ENCODE measurements at regions of chr19 and their contacts with region 1.

Region 1: DNA sequence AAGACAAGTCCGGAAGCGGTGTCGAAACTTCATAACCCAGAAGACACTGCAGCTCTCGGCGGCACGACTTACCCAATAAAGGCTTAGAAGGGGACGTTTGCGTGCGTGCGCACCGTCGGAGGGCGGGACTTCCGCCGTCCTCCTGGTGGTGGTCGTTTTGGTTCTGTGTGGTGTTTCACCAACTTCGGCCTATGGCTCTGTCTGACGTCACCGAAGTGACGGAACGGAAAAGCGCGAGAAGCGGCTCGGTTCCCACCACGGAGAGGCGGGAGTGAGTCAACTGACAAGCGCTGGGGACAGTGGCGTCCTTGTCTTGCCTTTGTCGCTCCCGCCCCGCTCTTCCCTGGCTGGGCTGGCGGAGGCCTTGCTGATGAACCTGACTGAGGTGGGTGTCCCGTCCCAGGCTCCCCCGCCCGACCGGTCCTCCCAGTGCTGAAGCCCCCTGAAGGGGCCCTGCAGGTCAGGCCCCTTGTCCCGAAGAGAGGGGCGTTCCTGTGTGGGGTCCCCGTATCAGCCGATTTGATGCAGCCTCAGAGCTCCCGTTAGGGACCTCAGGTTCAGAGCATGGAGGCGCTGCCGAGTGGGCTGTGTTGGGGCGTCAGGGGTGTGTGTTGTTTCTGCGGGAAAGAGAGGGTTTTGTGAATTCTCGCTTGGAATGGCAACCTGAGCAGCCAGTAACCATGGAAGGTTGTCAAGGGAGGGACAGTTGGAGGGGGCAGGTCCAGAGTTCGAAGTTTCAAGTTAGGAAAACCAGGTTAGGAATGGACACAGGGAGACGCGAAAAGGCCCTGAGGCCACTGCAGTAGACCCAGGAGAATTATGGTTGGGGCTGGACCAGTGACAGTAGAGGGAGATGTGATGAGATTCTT is at the start of gene ZNF548:
- DNase-seq: peak; percentile 96
- H3K4me3 Mint-ChIP-seq: peak within 1 kb of the TSS; percentile 75
- H3K27ac Mint-ChIP-seq: peak within 1 kb of the TSS; percentile 90
- H3K4me1 Mint-ChIP-seq: peaks cover 10% of the 10 kb centered on the region
- H3K27me3 Mint-ChIP-seq: no peaks in the 10 kb centered on the region
- CTCF ChIP-seq: no peak
- total RNA-seq, gene ZNF548: 20.3 and 23.0 TPM in 2 replicates

Region 2: GRCh38 chr19:57191141-57192076 is 198.6 kb before region 1 on chr19 and contains the start of gene ZNF264:
- CTCF ChIA-PET with region 1: no interaction called
- intact Hi-C with region 1: loop called (anchors 10 kb)
- DNase-seq: peak; percentile 93
- H3K4me3 Mint-ChIP-seq: peak within 1 kb of the TSS; percentile 85
- H3K27ac Mint-ChIP-seq: peak within 1 kb of the TSS; percentile 91
- H3K4me1 Mint-ChIP-seq: peaks cover 11% of the 10 kb centered on the region
- H3K27me3 Mint-ChIP-seq: no peaks in the 10 kb centered on the region
- CTCF ChIP-seq: no peak
- total RNA-seq, gene ZNF264: 28.7 and 29.0 TPM in 2 replicates

Region 3: DNA sequence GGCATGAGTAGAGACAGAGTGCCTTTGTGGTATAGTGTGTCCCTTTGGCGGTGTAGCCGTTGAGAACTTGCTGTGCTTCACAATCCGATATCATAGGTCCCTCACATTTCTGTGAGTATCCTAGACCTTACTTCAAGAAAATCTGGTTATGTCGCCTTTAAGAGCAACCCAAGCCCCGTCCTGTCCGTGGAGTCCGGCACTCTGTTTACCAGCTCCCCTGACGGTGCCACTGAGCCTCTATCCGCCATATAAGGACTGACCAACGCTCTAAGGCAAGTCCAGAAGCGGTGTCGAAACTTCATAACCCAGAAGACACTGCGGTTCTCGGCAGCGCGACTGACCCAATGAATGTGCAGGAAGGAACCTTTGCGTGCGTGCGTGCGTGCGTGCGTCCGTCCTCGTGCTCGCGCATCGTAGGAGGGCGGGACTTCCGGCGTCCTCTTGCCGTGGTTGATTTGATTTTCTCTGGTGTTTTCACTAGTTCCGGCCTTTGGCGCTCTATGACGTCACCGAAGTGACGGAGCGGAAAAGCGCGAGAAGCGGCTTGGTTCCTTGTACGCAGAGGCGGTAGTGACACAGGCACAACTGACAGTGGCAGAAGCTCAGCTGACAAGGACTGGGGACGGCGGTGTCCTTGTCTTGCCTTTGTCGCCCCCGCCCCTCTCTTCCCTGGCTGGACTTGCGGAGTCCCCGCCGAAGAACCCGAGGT is 26.8 kb before region 1 on chr19 and contains the starts of genes TRAPPC2B and ZNF547:
- CTCF ChIA-PET with region 1: interaction called, 5 read pairs
- intact Hi-C with region 1: loop called (anchors 1 kb)
- DNase-seq: peak; percentile 99
- H3K4me3 Mint-ChIP-seq: peak within 1 kb of the TSS; percentile 91
- H3K27ac Mint-ChIP-seq: peak within 1 kb of the TSS; percentile 99
- H3K4me1 Mint-ChIP-seq: peaks cover 21% of the 10 kb centered on the region
- H3K27me3 Mint-ChIP-seq: no peaks in the 10 kb centered on the region
- CTCF ChIP-seq: no peak
- total RNA-seq, gene TRAPPC2B: 11.7 and 16.3 TPM in 2 replicates
- total RNA-seq, gene ZNF547: 7.2 and 7.7 TPM in 2 replicates

Region 4: GRCh38 chr19:57410877-57411671 is 21.1 kb after region 1 on chr19 and contains the start of gene ZNF17:
- CTCF ChIA-PET with region 1: no interaction called
- intact Hi-C with region 1: loop called (anchors 1 kb)
- DNase-seq: peak; percentile 94
- H3K4me3 Mint-ChIP-seq: peak within 1 kb of the TSS; percentile 99
- H3K27ac Mint-ChIP-seq: peak within 1 kb of the TSS; percentile 65
- H3K4me1 Mint-ChIP-seq: peaks cover 10% of the 10 kb centered on the region
- H3K27me3 Mint-ChIP-seq: no peaks in the 10 kb centered on the region
- CTCF ChIP-seq: no peak
- total RNA-seq, gene ZNF17: 14.7 and 15.8 TPM in 2 replicates

Region 5: DNA sequence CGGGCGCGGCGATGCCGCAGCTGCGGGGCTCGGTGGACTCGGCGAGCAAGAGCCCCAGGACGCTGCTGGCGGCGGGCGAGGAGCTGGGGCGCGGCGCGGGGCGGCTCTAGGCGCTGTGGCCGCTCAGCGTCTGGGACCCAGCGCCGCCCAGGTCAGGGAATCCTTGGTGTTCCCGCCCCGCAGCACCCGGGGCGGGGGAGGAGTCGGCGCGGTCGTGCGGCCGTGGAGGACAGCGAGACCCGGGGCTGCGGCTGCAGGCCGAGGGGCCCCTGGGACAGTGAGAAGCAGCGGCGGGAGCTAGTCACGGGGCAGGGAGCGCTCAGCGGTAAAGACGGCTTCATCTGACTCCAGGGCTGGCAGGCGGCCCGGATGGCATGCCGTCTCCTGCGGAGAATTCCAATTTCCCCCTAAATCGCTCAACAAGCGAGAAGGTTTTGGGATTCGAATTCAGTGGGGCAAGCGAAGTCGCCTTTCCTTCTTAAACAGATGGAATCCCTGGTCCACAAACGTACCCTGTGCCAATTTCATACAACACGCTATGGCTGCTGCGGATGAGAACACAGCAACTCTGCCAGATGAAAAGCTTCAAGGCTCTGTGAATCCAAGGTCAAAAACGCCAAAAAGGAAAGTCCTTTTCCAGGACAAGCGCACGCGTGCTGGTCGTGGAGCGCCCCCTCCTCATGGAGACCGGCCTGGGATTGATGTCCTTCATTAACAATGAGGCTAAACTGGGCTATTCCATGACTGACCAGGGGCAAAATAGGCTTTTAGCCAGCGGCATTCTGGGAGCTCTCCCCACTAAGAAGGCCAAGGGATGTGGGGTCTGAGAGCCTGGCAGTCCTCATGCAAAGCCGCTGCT is 274.5 kb after region 1 on chr19:
- CTCF ChIA-PET with region 1: no interaction called
- intact Hi-C with region 1: no loop called
- DNase-seq: peak; percentile 49
- H3K4me3 Mint-ChIP-seq: peak overlapping the region; percentile 92
- H3K27ac Mint-ChIP-seq: no peak overlapping the region
- H3K4me1 Mint-ChIP-seq: no peaks in the 10 kb centered on the region
- H3K27me3 Mint-ChIP-seq: peaks cover 29% of the 10 kb centered on the region
- CTCF ChIP-seq: no peak